Common myeloid progenitor, CD34-positive (primary cell): ENCODE measurements at regions of chr16 and their contacts with region 1.

Region 1: GRCh38 chr16:4506450-4506849 is 30.3 kb downstream of the HMOX2 start:
- DNase-seq: peak; percentile 78 to 87 (median 82)
- H3K4me3 ChIP-seq: no peak overlapping the region
- H3K27ac ChIP-seq: peak overlapping the region; percentile 27 to 57
- H3K4me1 ChIP-seq: peaks cover 16 to 33% (median 31%) of the 10 kb centered on the region in 4 experiments
- H3K27me3 ChIP-seq: no peaks in the 10 kb centered on the region

Region 2: GRCh38 chr16:4435337-4436067 is 70.9 kb before region 1 on chr16:
- CTCF ChIA-PET with region 1: no interaction called
- POLR2A ChIA-PET with region 1: no interaction called
- DNase-seq: no peak
- H3K4me3 ChIP-seq: no peak overlapping the region
- H3K27ac ChIP-seq: peak overlapping the region in 1 of 2 experiments; percentile 16
- H3K4me1 ChIP-seq: peaks cover 0 to 10% (median 4%) of the 10 kb centered on the region in 4 experiments
- H3K27me3 ChIP-seq: no peaks in the 10 kb centered on the region

Region 3: DNA sequence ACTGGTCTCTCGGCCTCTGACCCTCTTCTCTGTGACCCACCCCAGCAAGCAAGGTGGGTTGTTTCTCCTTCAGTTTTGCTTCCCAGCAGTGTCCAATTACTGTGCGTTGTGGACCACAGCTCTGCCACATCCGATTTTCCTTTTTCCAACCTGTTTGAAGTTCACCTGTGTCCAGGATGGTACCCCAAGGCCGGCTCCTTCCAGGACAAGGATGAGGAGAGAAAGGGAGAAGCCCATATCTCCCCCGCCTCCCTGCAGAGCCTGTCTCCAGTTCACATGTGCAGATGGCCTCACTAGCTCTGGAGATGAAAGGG is 45.6 kb before region 1 on chr16:
- CTCF ChIA-PET with region 1: no interaction called
- POLR2A ChIA-PET with region 1: no interaction called
- DNase-seq: no peak
- H3K4me3 ChIP-seq: no peak overlapping the region
- H3K27ac ChIP-seq: no peak overlapping the region
- H3K4me1 ChIP-seq: peaks cover 0 to 8% (median 6%) of the 10 kb centered on the region in 4 experiments
- H3K27me3 ChIP-seq: no peaks in the 10 kb centered on the region

Region 4: DNA sequence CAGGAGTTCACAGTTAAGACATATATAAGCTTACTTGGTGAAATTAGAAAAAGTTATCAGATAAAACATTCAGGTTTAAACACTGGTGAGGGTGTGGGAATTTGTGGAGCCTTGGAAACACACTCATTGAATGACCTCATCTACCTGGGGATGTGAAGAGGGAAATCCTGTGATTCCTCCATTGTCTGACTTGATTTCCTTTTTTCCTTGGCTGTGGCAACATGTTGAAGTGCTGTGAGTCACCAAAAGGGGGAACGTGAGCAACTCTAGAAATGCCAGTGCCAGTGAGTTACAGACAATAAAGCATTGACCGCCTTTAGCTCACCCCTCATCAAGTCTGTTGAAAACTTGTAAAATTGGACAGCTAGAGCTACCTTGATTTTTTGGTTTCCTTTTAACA is 28.5 kb before region 1 on chr16:
- CTCF ChIA-PET with region 1: interaction called, 11 read pairs
- POLR2A ChIA-PET with region 1: no interaction called
- DNase-seq: peak in 2 of 3 donors; percentile 37 to 43
- H3K4me3 ChIP-seq: no peak overlapping the region
- H3K27ac ChIP-seq: no peak overlapping the region
- H3K4me1 ChIP-seq: peaks cover 2 to 44% (median 34%) of the 10 kb centered on the region in 4 experiments
- H3K27me3 ChIP-seq: no peaks in the 10 kb centered on the region

Region 5: GRCh38 chr16:4494746-4495490 is 11.5 kb before region 1 on chr16:
- CTCF ChIA-PET with region 1: interaction called, 29 read pairs
- POLR2A ChIA-PET with region 1: no interaction called
- DNase-seq: no peak
- H3K4me3 ChIP-seq: no peak overlapping the region
- H3K27ac ChIP-seq: no peak overlapping the region
- H3K4me1 ChIP-seq: no peaks in the 10 kb centered on the region
- H3K27me3 ChIP-seq: no peaks in the 10 kb centered on the region

Region 6: GRCh38 chr16:4538350-4539235 is 32.1 kb after region 1 on chr16 and contains the start of gene CDIP1:
- CTCF ChIA-PET with region 1: interaction called, 375 read pairs
- POLR2A ChIA-PET with region 1: no interaction called
- DNase-seq: peak; percentile 96 to 97 (median 97)
- H3K4me3 ChIP-seq: peak within 1 kb of the TSS; percentile 52 to 84 (median 70)
- H3K27ac ChIP-seq: peak within 1 kb of the TSS in 1 of 2 experiments; percentile 58
- H3K4me1 ChIP-seq: peaks cover 0 to 20% (median 16%) of the 10 kb centered on the region in 4 experiments
- H3K27me3 ChIP-seq: no peaks in the 10 kb centered on the region

Region 7: GRCh38 chr16:4561596-4561995 is 55.1 kb after region 1 on chr16:
- CTCF ChIA-PET with region 1: interaction called, 375 read pairs
- POLR2A ChIA-PET with region 1: no interaction called
- DNase-seq: no peak
- H3K4me3 ChIP-seq: no peak overlapping the region
- H3K27ac ChIP-seq: no peak overlapping the region
- H3K4me1 ChIP-seq: no peaks in the 10 kb centered on the region
- H3K27me3 ChIP-seq: no peaks in the 10 kb centered on the region

Region 8: DNA sequence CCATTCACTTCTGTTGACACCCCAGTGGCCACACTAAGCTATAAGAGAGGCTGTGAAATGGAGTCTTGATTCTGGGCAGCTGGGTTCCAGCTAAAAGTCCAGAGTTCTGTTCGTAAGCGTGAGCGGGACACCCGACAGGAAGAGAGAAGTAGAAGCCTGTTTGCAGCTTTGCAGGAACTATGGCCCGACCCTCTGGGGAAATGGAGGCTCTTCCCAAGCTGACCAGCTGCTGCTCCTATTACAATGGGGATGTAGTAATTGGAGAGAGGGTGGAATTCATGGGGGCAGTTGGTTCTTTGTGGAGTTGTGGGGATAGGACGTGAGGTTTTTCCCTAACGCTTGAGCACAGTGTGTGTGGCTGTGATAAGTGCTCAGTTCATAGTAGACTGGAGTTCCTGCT is 79.8 kb after region 1 on chr16:
- CTCF ChIA-PET with region 1: interaction called, 105 read pairs
- POLR2A ChIA-PET with region 1: interaction called, 3 read pairs
- DNase-seq: no peak
- H3K4me3 ChIP-seq: no peak overlapping the region
- H3K27ac ChIP-seq: no peak overlapping the region
- H3K4me1 ChIP-seq: peaks cover 0 to 2% (median 0%) of the 10 kb centered on the region in 4 experiments
- H3K27me3 ChIP-seq: peaks cover 0 to 11% (median 0%) of the 10 kb centered on the region in 5 experiments